RWPE1 (cell line): ENCODE measurements at regions of chr13 and their contacts with region 1.

Region 1: GRCh38 chr13:31909864-31910551 is 121.6 kb upstream of the FRY start:
- DNase-seq: peak; percentile 13
- H3K27ac ChIP-seq: no peak overlapping the region
- CTCF ChIP-seq: peak; percentile 89

Region 2: DNA sequence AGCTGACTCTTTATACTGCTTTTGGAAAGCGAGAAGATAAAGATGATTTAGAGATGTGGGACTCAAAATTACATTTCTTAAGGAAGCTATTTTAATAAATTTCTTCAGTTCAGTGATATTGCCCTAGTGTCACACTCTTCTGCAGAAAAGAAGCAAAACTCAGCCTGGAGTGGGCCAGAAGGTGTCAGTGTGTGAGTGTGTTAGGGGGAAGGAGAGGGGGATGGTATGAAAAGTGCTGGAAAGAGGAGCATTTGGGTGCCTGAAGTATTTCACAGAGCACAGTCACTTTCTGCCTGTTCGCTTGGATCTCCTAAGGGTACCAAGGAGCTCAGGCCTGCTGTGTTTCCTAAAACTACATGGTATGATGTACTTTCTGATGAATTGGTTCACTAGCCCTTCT is 37.1 kb after region 1 on chr13:
- CTCF ChIA-PET with region 1: no interaction called
- POLR2A ChIA-PET with region 1: no interaction called
- DNase-seq: no peak
- H3K27ac ChIP-seq: no peak overlapping the region
- CTCF ChIP-seq: no peak

Region 3: GRCh38 chr13:32117701-32118100 is 207.7 kb after region 1 on chr13:
- CTCF ChIA-PET with region 1: no interaction called
- POLR2A ChIA-PET with region 1: no interaction called
- DNase-seq: no peak
- H3K27ac ChIP-seq: no peak overlapping the region
- CTCF ChIP-seq: no peak

Region 4: DNA sequence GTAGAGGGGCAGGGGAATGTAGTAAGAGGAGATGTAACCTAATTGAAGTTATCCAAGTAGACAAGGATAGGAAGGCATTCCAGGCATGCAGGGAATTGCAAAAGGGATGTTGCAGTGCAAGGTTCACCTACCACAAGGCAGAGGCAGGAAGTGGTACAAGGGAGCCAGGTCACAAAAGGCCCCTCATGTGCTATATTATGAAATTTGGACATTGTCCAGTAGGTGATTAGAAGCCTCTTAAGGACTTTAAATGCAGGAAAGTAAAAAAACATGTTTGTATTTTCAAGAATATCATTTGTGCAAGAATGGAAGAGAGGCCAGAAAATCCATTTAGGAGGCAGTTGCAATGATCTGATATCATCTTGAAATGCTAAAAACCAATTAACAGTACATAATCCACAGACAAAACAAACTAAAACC is 233.0 kb after region 1 on chr13:
- CTCF ChIA-PET with region 1: interaction called, 10 read pairs
- POLR2A ChIA-PET with region 1: no interaction called
- DNase-seq: no peak
- H3K27ac ChIP-seq: no peak overlapping the region
- CTCF ChIP-seq: no peak